ENCODE measurements at regions of chr5 and their contacts with region 1.

Region 1: DNA sequence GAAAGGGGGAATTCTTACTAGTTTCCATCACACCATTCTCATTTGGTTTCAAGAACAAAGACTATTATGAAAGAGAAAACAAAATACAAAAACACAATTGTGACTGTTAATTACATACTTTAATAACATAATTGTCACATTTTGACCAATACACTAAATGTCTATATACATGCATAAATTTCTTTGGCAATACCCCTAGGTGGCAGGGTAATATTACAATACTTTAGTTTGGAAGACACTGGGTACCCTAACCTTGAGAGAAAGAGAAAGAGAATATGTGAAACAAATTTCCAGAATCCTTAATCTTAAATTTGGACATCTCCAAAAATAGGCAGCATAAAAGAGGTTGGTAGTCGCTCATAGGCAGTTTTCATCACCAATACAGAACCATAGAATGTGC is 619.6 kb upstream of the ADAMTS16 start:
- DNase-seq: no peak
- H3K4me3 ChIP-seq: no peak overlapping the region
- H3K27ac ChIP-seq: no peak overlapping the region
- H3K4me1 ChIP-seq: no peaks in the 10 kb centered on the region
- H3K27me3 ChIP-seq: no peaks in the 10 kb centered on the region
- CTCF ChIP-seq: peak in 1 of 2 donors; percentile 25

Region 2: DNA sequence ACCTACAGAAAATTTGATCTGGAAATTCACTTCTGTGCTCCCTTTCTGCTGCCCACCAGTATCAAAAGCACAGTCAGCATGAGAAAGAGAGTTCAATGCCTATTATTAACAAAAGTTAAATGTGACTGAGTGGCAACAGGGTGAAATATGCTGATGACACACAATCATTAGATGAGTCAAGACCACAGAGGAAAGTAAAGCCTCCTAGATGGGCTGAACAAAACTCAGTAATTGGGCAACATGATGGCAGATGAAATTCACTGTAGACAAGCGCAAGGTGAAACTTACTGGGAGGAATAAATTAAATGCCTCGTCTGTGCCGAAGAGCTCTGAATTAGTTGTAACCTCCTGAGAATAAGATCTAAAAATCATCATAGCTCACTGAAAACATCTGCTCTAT is 172.1 kb before region 1 on chr5:
- CTCF ChIA-PET with region 1: no interaction called
- dilution Hi-C with region 1: no loop called
- in situ Hi-C with region 1: no loop called
- intact Hi-C with region 1: no loop called
- DNase-seq: peak; percentile 83
- H3K4me3 ChIP-seq: no peak overlapping the region
- H3K27ac ChIP-seq: peak overlapping the region; percentile 37
- H3K4me1 ChIP-seq: peaks cover 11% of the 10 kb centered on the region
- H3K27me3 ChIP-seq: no peaks in the 10 kb centered on the region
- CTCF ChIP-seq: no peak

Region 3: DNA sequence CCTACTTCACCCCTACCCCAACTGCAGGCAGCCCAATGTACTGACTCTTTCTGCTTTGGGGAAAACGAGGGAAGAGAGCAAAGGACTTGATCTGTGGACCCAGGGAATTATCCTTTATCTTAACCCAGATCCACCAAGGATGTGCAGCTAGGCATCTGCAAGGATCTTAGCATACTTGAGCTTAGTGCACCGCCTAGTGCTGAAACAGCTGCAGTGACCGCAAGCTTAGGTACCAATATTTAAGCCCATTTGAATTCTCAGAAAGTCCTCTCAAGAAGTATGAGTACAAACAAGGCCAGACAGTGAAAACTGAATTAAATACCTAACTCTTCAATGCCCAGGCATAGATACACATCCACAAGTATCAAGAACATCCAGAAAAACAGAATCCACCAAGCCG is 42.8 kb after region 1 on chr5:
- CTCF ChIA-PET with region 1: no interaction called
- dilution Hi-C with region 1: no loop called
- in situ Hi-C with region 1: no loop called
- intact Hi-C with region 1: loop called (anchors 1 kb)
- DNase-seq: peak; percentile 50
- H3K4me3 ChIP-seq: no peak overlapping the region
- H3K27ac ChIP-seq: no peak overlapping the region
- H3K4me1 ChIP-seq: no peaks in the 10 kb centered on the region
- H3K27me3 ChIP-seq: no peaks in the 10 kb centered on the region
- CTCF ChIP-seq: peak; percentile 88 to 89

Region 4: DNA sequence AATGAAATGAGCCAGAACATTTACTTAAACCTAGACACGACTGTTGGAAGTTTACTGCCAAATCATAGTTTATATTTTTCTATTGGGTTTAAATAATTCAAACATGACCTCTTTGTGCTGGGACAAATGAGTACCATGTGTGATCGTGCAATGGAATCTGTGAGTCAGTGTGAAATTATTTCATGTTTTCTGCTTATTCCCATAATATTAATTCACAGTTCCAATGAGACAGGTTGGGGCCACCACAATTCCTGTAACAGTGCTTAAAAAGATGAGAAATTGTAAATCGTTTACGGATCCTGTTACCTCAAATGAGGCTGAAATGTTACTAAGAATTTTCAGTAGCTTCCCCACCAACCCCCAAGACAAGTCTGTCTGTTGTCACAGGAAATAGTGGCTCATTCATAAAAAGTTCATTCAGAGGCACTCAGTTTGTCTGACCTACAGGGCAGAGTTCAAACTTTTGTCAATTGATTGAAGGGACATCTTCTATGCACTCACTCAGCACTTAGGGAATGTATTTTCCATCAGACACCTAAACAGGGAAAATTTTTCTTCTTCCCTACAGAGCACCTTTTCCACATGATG is 55.7 kb after region 1 on chr5:
- CTCF ChIA-PET with region 1: no interaction called
- dilution Hi-C with region 1: no loop called
- in situ Hi-C with region 1: no loop called
- intact Hi-C with region 1: no loop called
- DNase-seq: no peak
- H3K4me3 ChIP-seq: no peak overlapping the region
- H3K27ac ChIP-seq: no peak overlapping the region
- H3K4me1 ChIP-seq: peaks cover 8% of the 10 kb centered on the region
- H3K27me3 ChIP-seq: no peaks in the 10 kb centered on the region
- CTCF ChIP-seq: no peak

Region 5: GRCh38 chr5:4837489-4838058 is 317.0 kb after region 1 on chr5:
- CTCF ChIA-PET with region 1: no interaction called
- dilution Hi-C with region 1: no loop called
- in situ Hi-C with region 1: no loop called
- intact Hi-C with region 1: no loop called
- DNase-seq: no peak
- H3K4me3 ChIP-seq: no peak overlapping the region
- H3K27ac ChIP-seq: no peak overlapping the region
- H3K4me1 ChIP-seq: no peaks in the 10 kb centered on the region
- H3K27me3 ChIP-seq: no peaks in the 10 kb centered on the region
- CTCF ChIP-seq: no peak

Region 6: GRCh38 chr5:4847766-4848165 is 327.2 kb after region 1 on chr5:
- CTCF ChIA-PET with region 1: no interaction called
- dilution Hi-C with region 1: no loop called
- in situ Hi-C with region 1: no loop called
- intact Hi-C with region 1: loop called (anchors 5 kb)
- DNase-seq: no peak
- H3K4me3 ChIP-seq: no peak overlapping the region
- H3K27ac ChIP-seq: no peak overlapping the region
- H3K4me1 ChIP-seq: no peaks in the 10 kb centered on the region
- H3K27me3 ChIP-seq: no peaks in the 10 kb centered on the region
- CTCF ChIP-seq: no peak

Region 7: GRCh38 chr5:4862500-4862899 is 341.9 kb after region 1 on chr5:
- CTCF ChIA-PET with region 1: no interaction called
- dilution Hi-C with region 1: no loop called
- in situ Hi-C with region 1: no loop called
- intact Hi-C with region 1: loop called (anchors 5 kb)
- DNase-seq: peak; percentile 14
- H3K4me3 ChIP-seq: no peak overlapping the region
- H3K27ac ChIP-seq: no peak overlapping the region
- H3K4me1 ChIP-seq: no peaks in the 10 kb centered on the region
- H3K27me3 ChIP-seq: no peaks in the 10 kb centered on the region
- CTCF ChIP-seq: peak; percentile 46 to 63

Region 8: DNA sequence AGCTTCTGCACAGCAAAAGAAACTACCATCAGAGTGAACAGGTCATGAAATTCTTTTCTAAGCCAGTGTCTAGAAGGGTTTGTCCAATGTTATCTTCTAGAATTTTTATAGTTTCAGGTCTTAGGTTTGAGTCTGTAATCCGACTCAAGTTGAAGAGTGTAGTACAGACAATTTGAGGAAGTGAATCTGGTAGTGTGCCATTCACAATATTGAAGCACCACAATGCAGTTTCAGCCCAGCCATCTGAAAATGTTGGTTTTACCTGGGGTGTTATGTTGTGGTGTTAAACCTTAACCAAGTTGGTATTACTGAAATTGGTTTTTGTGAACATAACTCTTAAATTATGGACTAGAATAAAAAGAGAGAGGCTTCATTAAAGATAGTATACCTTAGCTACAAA is 696.8 kb after region 1 on chr5:
- CTCF ChIA-PET with region 1: no interaction called
- dilution Hi-C with region 1: no loop called
- in situ Hi-C with region 1: no loop called
- intact Hi-C with region 1: no loop called
- DNase-seq: no peak
- H3K4me3 ChIP-seq: no peak overlapping the region
- H3K27ac ChIP-seq: no peak overlapping the region
- H3K4me1 ChIP-seq: no peaks in the 10 kb centered on the region
- H3K27me3 ChIP-seq: no peaks in the 10 kb centered on the region
- CTCF ChIP-seq: no peak

Measured in mammary epithelial cell (primary cell).